T-cell (primary cell): ENCODE measurements at regions of chr12 and their contacts with region 1.

Region 1: DNA sequence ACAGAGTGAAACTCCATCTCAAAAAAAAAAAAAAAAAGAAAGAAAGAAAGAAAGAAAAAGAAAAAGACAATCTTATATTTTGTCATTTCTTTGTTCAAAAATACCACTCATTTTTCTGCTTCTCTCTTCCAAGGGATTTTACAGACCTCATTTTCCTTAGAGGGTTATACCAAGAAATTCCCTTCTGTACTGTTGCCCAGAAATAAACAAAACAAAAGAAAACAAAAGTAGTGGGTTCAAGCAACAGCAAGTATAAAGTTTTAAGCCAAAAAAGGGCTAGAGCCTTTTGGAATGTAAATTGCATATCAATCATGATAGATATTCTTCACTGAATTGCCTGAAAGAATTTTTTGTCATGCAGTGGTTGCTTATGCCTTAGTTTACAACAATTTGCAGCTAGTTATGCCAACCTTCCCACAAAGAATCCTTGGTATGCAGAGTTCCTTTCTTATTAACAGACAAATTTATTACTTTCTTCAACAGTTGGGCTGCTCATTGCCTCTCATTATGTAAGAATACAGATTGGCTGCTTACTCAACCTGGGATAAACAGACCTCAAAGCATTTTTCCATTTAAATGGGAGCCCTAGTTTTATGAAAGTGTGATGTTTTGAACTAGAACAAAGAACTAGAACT is 129.1 kb upstream of the PPFIA2 start:
- DNase-seq: no peak
- ATAC-seq: no peak
- H3K4me3 ChIP-seq: no peak overlapping the region
- H3K4me3 Mint-ChIP-seq: no peak overlapping the region
- H3K27ac ChIP-seq: no peak overlapping the region
- H3K27ac Mint-ChIP-seq: no peak overlapping the region
- H3K4me1 ChIP-seq: no peaks in the 10 kb centered on the region
- H3K4me1 Mint-ChIP-seq: no peaks in the 10 kb centered on the region
- H3K27me3 ChIP-seq: no peaks in the 10 kb centered on the region
- H3K27me3 Mint-ChIP-seq: no peaks in the 10 kb centered on the region

Region 2: GRCh38 chr12:81718616-81719015 is 169.6 kb before region 1 on chr12:
- CTCF ChIA-PET with region 1: no interaction called
- POLR2A ChIA-PET with region 1: interaction called in 1 of 2 experiments, 13 read pairs
- DNase-seq: no peak
- ATAC-seq: no peak
- H3K4me3 ChIP-seq: no peak overlapping the region
- H3K4me3 Mint-ChIP-seq: no peak overlapping the region
- H3K27ac ChIP-seq: no peak overlapping the region
- H3K27ac Mint-ChIP-seq: no peak overlapping the region
- H3K4me1 ChIP-seq: no peaks in the 10 kb centered on the region
- H3K4me1 Mint-ChIP-seq: no peaks in the 10 kb centered on the region
- H3K27me3 ChIP-seq: no peaks in the 10 kb centered on the region
- H3K27me3 Mint-ChIP-seq: no peaks in the 10 kb centered on the region

Region 3: GRCh38 chr12:81976661-81977060 is 88.4 kb after region 1 on chr12:
- CTCF ChIA-PET with region 1: no interaction called
- POLR2A ChIA-PET with region 1: no interaction called
- DNase-seq: no peak
- ATAC-seq: no peak
- H3K4me3 ChIP-seq: no peak overlapping the region
- H3K4me3 Mint-ChIP-seq: no peak overlapping the region
- H3K27ac ChIP-seq: no peak overlapping the region
- H3K27ac Mint-ChIP-seq: no peak overlapping the region
- H3K4me1 ChIP-seq: no peaks in the 10 kb centered on the region
- H3K4me1 Mint-ChIP-seq: no peaks in the 10 kb centered on the region
- H3K27me3 ChIP-seq: no peaks in the 10 kb centered on the region
- H3K27me3 Mint-ChIP-seq: no peaks in the 10 kb centered on the region